IMR-90 (cell line): ENCODE measurements at regions of chr4 and their contacts with region 1.

Region 1: GRCh38 chr4:8241895-8242696 is 27.5 kb upstream of the HTRA3 start:
- DNase-seq: peak; percentile 91
- ATAC-seq: peak; percentile 99
- H3K4me3 ChIP-seq: no peak overlapping the region
- H3K27ac ChIP-seq: no peak overlapping the region
- H3K4me1 ChIP-seq: peaks cover 5% of the 10 kb centered on the region
- H3K27me3 ChIP-seq: no peaks in the 10 kb centered on the region; the same call in 1 of the 2 replicates
- CTCF ChIP-seq: peak; percentile 97
- POLR2A ChIP-seq: no peak
- RAD21 ChIP-seq: peak; percentile 98

Region 2: DNA sequence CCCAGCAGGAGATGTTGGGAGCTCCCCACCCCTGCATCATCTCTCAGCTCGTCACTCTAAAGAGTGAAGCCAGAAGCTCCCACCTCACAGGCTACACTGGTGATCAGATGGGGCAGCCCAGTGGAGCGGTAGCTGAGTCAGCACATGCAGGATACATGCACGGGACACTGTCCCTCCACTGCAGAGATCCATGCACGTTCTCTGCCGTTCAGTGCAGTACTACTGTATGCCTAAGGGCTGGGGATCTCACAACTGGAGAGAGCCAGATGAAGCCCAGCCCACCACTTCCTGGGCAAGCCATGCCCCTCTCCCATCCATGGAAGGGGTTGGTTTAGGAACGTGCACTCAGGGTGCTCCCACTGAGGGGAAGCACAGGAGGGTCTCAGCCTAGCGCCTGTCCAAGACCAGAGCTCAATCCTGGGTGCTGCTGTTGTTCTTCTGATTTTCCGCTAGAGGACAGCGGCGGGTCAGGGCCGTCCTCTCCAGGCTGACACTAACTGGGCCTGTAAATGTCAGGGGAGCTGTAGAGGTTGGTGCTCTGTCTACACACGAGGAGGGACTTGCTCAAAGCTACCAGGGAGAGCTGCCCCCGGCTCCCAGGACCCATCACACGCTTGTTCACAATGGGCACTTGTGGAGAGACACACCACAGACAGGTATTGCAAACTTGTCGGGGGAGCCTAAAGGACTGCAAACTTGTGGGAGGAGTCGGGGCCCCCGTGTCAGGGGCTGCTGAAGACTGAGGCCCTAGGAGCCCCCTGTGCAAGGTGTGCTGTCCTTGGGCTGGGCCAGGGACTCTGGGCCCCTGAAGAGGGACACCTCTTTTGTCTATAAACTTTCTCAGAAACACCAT is 65.3 kb before region 1 on chr4:
- CTCF ChIA-PET with region 1: interaction called, 6 read pairs
- POLR2A ChIA-PET with region 1: no interaction called
- dilution Hi-C with region 1: no loop called
- in situ Hi-C with region 1: no loop called
- intact Hi-C with region 1: loop called (anchors 1 kb)
- DNase-seq: peak; percentile 52
- ATAC-seq: peak; percentile 99
- H3K4me3 ChIP-seq: no peak overlapping the region
- H3K27ac ChIP-seq: no peak overlapping the region
- H3K4me1 ChIP-seq: no peaks in the 10 kb centered on the region
- H3K27me3 ChIP-seq: peaks cover 38% of the 10 kb centered on the region
- CTCF ChIP-seq: peak; percentile 93
- POLR2A ChIP-seq: no peak
- RAD21 ChIP-seq: peak; percentile 94

Region 3: DNA sequence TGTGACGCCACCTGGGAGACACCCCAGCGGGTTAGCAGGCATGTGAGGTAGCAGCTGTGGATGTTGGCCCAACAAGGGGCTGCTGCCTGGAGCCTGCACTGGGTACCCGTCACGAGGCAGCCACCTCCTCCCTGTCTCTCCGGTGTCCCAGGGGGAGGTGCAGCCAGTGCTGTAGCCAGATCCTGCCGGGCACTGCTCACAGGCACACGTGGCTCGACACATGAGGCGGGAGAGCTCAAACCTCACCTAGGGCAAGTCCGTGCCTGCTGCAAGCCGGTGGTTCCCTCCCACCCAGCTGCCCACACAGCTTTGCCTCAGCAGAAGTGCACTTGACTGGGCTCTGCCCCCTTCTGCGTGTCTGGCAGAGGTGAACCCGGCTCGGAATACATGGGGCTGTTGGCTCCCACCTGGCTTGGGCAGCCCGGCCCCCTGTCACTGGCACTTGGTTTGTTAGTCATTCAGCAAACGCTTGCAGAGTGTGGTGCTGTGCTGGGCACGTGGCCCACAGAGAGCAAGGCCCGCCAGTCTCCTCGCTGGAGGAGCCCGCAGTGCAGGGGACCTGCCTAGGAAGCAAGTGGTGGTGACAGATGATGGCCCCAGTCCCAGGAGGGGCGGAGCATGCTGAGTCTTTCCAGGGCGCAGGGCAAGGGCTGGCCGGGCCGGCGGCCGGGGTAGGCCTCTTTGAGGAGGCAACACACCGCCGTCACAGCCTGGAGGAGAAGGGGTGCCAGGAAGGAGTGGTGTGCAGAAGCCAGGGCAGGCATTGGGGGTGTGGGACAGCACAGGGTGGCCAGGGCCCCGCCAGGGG is 53.1 kb before region 1 on chr4:
- CTCF ChIA-PET with region 1: no interaction called
- POLR2A ChIA-PET with region 1: no interaction called
- dilution Hi-C with region 1: no loop called
- in situ Hi-C with region 1: no loop called
- intact Hi-C with region 1: no loop called
- DNase-seq: no peak
- ATAC-seq: peak; percentile 18; the same call in 1 of the 2 replicates
- H3K4me3 ChIP-seq: no peak overlapping the region
- H3K27ac ChIP-seq: no peak overlapping the region
- H3K4me1 ChIP-seq: peaks cover 6% of the 10 kb centered on the region; the same call in 1 of the 2 replicates
- H3K27me3 ChIP-seq: peaks cover 6% of the 10 kb centered on the region; the same call in 1 of the 2 replicates
- CTCF ChIP-seq: no peak
- POLR2A ChIP-seq: no peak
- RAD21 ChIP-seq: no peak

Region 4: DNA sequence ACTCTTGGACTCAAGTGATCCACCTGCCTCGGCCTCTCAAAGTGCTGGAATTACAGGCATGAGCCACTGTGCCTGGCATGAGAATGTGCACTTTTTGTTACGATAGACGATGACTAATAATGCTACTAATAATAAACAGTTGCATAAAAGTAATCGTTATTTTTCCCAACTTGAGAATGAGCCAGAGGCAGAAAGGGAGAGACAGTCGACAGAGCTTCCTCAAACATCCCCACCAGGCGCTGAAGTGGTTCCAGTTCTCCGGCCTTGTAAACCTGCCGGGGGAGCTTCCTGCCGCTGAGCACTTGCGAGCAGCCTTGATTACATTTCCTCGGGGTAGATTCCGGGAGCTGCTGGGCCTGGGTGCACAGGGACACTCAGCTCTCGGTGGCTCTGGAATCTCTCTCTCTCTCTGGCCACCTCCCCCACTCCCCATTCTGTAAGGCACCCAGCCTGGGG is 18.6 kb after region 1 on chr4:
- CTCF ChIA-PET with region 1: no interaction called
- POLR2A ChIA-PET with region 1: no interaction called
- dilution Hi-C with region 1: no loop called
- in situ Hi-C with region 1: no loop called
- intact Hi-C with region 1: loop called (anchors 1 kb)
- DNase-seq: peak; percentile 96
- ATAC-seq: peak; percentile 94
- H3K4me3 ChIP-seq: no peak overlapping the region
- H3K27ac ChIP-seq: peak overlapping the region; percentile 34
- H3K4me1 ChIP-seq: peaks cover 7% of the 10 kb centered on the region
- H3K27me3 ChIP-seq: peaks cover 4% of the 10 kb centered on the region; the same call in 1 of the 2 replicates
- CTCF ChIP-seq: no peak
- POLR2A ChIP-seq: no peak
- RAD21 ChIP-seq: peak; percentile 40

Region 5: DNA sequence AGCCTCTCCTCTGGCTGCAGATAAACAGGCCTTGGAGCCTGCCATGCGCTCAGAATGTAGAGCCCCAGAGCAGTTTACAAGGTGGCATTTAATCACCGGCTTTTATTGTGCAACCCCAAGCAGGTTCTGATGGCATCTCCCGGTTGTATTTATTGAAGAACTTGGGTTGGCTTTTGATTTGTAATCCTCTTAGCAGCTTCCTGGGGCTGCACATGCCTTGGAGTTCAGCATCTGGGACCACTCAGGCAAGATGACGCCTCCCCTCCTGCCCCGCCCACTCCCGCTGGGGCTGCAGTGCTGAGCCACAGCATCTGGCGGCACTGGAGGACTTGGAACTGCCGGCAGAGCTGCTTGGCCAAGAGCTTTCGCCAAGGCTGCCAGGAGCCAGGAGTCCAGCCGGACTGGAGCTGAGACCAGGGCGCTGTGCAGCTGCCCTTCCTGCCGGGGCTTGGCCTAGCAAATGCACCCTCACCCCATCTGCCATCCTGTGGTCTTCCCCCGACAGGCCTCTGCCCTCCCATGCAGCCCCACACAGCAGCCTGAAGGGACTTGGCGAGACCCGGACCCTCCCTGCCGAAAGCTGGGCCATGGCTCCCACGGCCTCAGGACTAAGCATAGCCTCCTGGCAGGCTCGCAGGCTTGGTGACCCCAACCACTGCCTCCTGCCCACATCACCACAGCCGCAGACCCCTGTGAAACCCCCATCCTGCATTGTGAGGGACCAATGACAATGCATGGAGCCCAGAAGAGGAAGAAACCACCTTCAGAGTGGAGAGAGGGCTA is 32.9 kb after region 1 on chr4:
- CTCF ChIA-PET with region 1: interaction called, 7 read pairs
- POLR2A ChIA-PET with region 1: no interaction called
- dilution Hi-C with region 1: no loop called
- in situ Hi-C with region 1: no loop called
- intact Hi-C with region 1: loop called (anchors 1 kb)
- DNase-seq: peak; percentile 93
- ATAC-seq: peak; percentile 77
- H3K4me3 ChIP-seq: no peak overlapping the region
- H3K27ac ChIP-seq: peak overlapping the region; percentile 36
- H3K4me1 ChIP-seq: peaks cover 41% of the 10 kb centered on the region
- H3K27me3 ChIP-seq: peaks cover 9% of the 10 kb centered on the region
- CTCF ChIP-seq: peak; percentile 76
- POLR2A ChIP-seq: no peak
- RAD21 ChIP-seq: peak; percentile 90